Activated CD4-positive, alpha-beta memory T cell treated with anti-CD3 and anti-CD28 coated beads, Interleukin-2, amount 10 ng/mL, durations not matched to agents 7 days and 5 days (primary cell): ENCODE measurements at regions of chr12 and their contacts with region 1.

Region 1: GRCh38 chr12:121550974-121551634 is 29.7 kb downstream of the KDM2B start:
- DNase-seq: no peak
- H3K4me3 Mint-ChIP-seq: no peak overlapping the region
- H3K27ac Mint-ChIP-seq: no peak overlapping the region
- H3K4me1 Mint-ChIP-seq: peaks cover 12% of the 10 kb centered on the region
- H3K27me3 Mint-ChIP-seq: no peaks in the 10 kb centered on the region

Region 2: DNA sequence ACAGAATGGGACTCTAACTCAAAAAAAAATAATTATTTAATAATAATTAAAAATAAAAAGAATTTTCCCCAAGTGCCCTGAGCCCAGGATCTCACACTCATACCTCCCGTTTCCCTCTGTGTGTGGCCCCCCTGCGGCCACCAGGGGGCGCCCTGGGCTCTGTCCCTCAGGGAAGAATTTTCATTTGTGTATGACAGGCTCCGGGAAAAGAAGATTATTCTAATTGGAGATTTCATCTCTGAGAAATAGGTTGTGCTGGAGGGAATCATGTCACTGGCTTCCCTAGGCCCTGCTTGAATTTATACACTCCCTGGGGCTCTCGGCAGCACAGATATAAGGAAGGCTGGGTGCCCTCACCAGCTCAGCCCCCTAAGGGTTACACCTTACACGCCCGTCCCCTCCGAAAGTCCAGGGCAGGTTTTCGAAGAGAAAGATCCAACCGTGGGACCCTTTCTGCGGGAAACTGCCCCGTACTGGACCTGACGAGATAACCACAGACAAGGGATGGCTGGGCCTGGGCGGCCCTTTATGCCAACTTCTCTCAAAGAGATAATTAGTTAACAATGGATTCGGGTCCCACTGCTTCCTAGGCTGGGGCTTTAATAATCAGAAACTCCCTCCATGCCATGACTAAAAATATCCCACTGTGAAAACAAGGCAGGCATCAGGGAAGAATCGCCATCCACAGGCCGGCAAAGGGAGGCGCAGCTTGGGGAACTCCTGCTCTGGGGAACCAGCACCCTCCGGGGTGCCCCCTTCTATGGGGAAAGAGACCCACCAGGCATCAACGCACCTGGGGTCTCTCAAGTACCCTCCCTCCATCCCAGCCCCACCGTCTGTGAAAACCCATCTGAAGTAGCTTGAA is 50.9 kb before region 1 on chr12:
- CTCF ChIA-PET with region 1: interaction called, 13 read pairs
- POLR2A ChIA-PET with region 1: interaction called, 5 read pairs
- DNase-seq: peak; percentile 73
- H3K4me3 Mint-ChIP-seq: no peak overlapping the region
- H3K27ac Mint-ChIP-seq: no peak overlapping the region
- H3K4me1 Mint-ChIP-seq: peaks cover 16% of the 10 kb centered on the region
- H3K27me3 Mint-ChIP-seq: no peaks in the 10 kb centered on the region

Region 3: GRCh38 chr12:121579981-121580868 is 29.1 kb after region 1 on chr12:
- CTCF ChIA-PET with region 1: interaction called, 12 read pairs
- POLR2A ChIA-PET with region 1: interaction called, 6 read pairs
- DNase-seq: peak; percentile 80
- H3K4me3 Mint-ChIP-seq: peak overlapping the region; percentile 97
- H3K27ac Mint-ChIP-seq: peak overlapping the region; percentile 99
- H3K4me1 Mint-ChIP-seq: peaks cover 38% of the 10 kb centered on the region
- H3K27me3 Mint-ChIP-seq: no peaks in the 10 kb centered on the region

Region 4: DNA sequence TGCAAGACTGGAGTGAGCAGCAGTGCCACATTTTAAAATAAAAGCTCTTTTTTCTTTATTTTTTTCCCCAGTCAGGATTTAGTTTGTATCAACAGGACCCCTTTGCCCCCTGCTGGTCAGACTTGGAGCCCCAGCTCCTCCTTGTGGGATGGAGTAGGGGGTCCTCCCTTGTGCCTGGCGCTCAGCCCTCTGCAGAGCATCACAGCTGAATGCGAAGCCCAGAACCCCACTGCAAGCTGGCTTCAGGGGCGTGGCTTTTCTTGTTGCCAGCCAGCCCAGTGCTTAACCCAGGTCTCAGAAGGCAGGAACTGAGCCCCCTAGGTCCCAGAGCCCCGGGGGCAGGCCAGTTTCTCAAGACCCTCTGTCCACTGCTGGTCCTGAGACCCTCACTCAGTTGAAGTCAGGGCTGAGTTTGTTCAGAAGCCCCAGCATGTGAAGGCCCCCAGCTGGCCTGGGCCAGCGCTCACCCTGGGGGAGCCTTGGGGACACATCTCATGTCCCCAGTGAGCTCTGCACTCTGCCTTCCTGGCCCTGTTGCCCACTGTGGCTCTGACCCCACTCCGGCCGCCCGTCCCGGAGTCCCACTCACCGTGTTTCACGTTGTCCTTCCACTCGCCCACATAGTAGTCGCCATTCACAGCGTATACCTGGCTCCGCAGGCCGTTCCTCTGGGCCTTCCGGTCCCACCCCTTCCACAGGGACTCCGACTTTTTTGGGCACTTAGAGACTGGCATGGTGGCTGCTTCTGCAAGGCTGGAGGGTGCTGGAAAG is 117.8 kb after region 1 on chr12:
- CTCF ChIA-PET with region 1: interaction called, 43 read pairs
- POLR2A ChIA-PET with region 1: interaction called, 5 read pairs
- DNase-seq: peak; percentile 57
- H3K4me3 Mint-ChIP-seq: no peak overlapping the region
- H3K27ac Mint-ChIP-seq: no peak overlapping the region
- H3K4me1 Mint-ChIP-seq: peaks cover 65% of the 10 kb centered on the region
- H3K27me3 Mint-ChIP-seq: no peaks in the 10 kb centered on the region

Region 5: GRCh38 chr12:121688966-121689365 is 137.9 kb after region 1 on chr12:
- CTCF ChIA-PET with region 1: interaction called, 45 read pairs
- POLR2A ChIA-PET with region 1: no interaction called
- DNase-seq: no peak
- H3K4me3 Mint-ChIP-seq: no peak overlapping the region
- H3K27ac Mint-ChIP-seq: no peak overlapping the region
- H3K4me1 Mint-ChIP-seq: peaks cover 15% of the 10 kb centered on the region
- H3K27me3 Mint-ChIP-seq: peaks cover 2% of the 10 kb centered on the region